PC-3 (cell line): ENCODE measurements at regions of chr22 and their contacts with region 1.

Region 1: DNA sequence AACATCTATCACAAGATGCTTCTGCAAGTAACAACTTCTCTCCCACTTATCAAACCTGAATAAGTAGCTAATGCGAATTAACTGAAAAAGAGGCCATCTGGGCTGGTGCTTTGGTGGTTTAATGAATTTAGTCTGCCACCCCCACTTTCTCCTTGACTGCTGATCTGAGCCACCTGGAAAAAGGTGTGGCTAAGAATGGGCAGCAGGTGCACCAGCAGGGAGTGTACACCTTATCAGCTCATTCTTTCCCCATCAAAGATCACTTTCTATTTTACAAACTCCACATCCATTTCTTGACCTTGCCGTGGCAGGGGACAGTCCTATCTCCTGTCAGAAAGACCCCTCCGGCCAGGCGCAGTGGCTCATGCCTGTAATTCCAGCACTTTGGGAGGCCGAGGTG is 6.5 kb downstream of the RFPL3 start:
- DNase-seq: no peak
- ATAC-seq: no peak
- H3K4me3 ChIP-seq: no peak overlapping the region
- H3K27ac ChIP-seq: no peak overlapping the region
- H3K4me1 ChIP-seq: no peaks in the 10 kb centered on the region
- H3K27me3 ChIP-seq: no peaks in the 10 kb centered on the region
- CTCF ChIP-seq: no peak

Region 2: GRCh38 chr22:32309585-32310251 is 54.5 kb before region 1 on chr22:
- CTCF ChIA-PET with region 1: no interaction called
- POLR2A ChIA-PET with region 1: interaction called, 16 read pairs
- intact Hi-C with region 1: no loop called
- DNase-seq: no peak
- ATAC-seq: no peak
- H3K4me3 ChIP-seq: no peak overlapping the region
- H3K27ac ChIP-seq: no peak overlapping the region
- H3K4me1 ChIP-seq: no peaks in the 10 kb centered on the region
- H3K27me3 ChIP-seq: peaks cover 16% of the 10 kb centered on the region
- CTCF ChIP-seq: no peak

Region 3: GRCh38 chr22:32324505-32325415 is 39.5 kb before region 1 on chr22:
- CTCF ChIA-PET with region 1: no interaction called
- POLR2A ChIA-PET with region 1: no interaction called
- intact Hi-C with region 1: no loop called
- DNase-seq: no peak
- ATAC-seq: no peak
- H3K4me3 ChIP-seq: no peak overlapping the region
- H3K27ac ChIP-seq: no peak overlapping the region
- H3K4me1 ChIP-seq: no peaks in the 10 kb centered on the region
- H3K27me3 ChIP-seq: 0 out of 2 replicates have a peak, but pooled peaks cover 4% of the 10 kb centered on the region
- CTCF ChIP-seq: no peak

Region 4: GRCh38 chr22:32444068-32444467 is 79.9 kb after region 1 on chr22:
- CTCF ChIA-PET with region 1: no interaction called
- POLR2A ChIA-PET with region 1: no interaction called
- intact Hi-C with region 1: no loop called
- DNase-seq: peak; percentile 52
- ATAC-seq: peak; percentile 82
- H3K4me3 ChIP-seq: no peak overlapping the region
- H3K27ac ChIP-seq: no peak overlapping the region
- H3K4me1 ChIP-seq: no peaks in the 10 kb centered on the region
- H3K27me3 ChIP-seq: peaks cover 23% of the 10 kb centered on the region; the same call in 1 of the 2 replicates
- CTCF ChIP-seq: peak; percentile 68